ENCODE measurements at regions of chr2 and their contacts with region 1.

Region 1: DNA sequence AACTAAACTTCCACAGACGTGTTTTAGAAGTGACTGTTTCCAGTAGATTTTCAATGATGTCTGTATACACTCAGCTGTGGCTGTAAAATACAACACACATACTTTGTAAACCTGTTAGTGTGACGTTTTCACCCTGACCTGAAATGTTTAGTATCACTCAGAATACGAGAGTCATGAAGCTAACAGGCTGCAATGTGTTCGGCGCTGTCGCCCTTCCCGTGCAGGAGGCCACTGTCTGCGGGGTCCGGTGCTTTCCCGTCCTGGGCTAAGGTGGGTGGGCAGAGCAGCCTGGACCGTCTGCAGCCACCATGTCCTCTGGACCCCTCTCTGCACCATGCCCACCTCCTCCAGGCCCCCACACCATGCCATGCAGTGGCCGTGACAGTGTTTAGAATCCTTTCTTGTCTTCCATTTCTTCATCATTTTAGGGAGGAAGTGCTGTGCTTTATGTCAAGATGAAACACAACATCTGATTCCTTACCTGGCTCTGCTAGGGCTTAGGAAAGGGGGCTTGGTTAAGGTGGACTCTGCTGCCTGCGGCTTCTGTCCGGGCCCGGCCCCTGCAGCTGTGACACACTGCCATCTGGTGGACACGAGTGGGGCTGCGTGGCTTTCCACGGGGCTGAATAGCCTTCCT is 53.8 kb upstream of the RBM44 start:
- DNase-seq: peak; percentile 78
- ATAC-seq: peak; percentile 84
- H3K4me3 Mint-ChIP-seq: no peak overlapping the region
- H3K27ac Mint-ChIP-seq: peak overlapping the region; percentile 52
- H3K4me1 Mint-ChIP-seq: peaks cover 24% of the 10 kb centered on the region
- H3K27me3 Mint-ChIP-seq: no peaks in the 10 kb centered on the region

Region 2: DNA sequence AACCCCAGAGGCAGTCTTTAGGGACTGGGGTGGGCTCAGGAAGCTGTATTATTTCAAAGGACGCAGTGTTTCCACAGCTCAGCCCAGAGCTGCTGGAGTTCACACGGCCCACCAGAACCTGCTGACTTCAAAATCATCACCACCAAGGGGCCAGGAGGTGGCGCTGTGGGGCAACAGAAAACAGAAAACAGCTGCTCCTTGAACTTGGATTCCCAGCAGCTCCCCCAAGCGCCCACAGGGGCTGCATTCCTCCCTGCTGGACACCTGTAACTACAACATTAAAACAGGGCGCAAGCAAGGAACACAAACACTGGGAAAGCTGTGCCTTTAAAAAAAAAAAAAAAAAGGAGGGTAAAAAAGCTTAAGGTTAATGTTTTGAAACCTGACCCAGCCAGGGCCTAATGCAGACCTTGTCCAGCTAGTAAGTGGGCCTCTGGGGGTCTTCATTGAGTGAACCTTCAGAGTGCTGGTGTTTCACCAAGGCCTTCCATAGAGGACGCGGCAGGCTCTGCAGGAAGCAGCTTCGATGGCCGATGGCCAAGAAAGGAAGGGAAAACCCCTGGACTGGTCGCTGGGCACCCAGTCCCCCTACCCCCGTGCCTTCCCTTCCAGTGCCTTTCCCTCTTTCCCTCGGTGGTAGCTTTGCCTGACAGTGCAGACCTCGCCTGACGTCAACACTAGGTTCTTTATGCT is 231.8 kb before region 1 on chr2:
- CTCF ChIA-PET with region 1: interaction called, 24 read pairs
- POLR2A ChIA-PET with region 1: no interaction called
- DNase-seq: peak; percentile 84
- ATAC-seq: peak; percentile 87
- H3K4me3 Mint-ChIP-seq: no peak overlapping the region
- H3K27ac Mint-ChIP-seq: no peak overlapping the region
- H3K4me1 Mint-ChIP-seq: no peaks in the 10 kb centered on the region
- H3K27me3 Mint-ChIP-seq: peaks cover 5% of the 10 kb centered on the region

Region 3: DNA sequence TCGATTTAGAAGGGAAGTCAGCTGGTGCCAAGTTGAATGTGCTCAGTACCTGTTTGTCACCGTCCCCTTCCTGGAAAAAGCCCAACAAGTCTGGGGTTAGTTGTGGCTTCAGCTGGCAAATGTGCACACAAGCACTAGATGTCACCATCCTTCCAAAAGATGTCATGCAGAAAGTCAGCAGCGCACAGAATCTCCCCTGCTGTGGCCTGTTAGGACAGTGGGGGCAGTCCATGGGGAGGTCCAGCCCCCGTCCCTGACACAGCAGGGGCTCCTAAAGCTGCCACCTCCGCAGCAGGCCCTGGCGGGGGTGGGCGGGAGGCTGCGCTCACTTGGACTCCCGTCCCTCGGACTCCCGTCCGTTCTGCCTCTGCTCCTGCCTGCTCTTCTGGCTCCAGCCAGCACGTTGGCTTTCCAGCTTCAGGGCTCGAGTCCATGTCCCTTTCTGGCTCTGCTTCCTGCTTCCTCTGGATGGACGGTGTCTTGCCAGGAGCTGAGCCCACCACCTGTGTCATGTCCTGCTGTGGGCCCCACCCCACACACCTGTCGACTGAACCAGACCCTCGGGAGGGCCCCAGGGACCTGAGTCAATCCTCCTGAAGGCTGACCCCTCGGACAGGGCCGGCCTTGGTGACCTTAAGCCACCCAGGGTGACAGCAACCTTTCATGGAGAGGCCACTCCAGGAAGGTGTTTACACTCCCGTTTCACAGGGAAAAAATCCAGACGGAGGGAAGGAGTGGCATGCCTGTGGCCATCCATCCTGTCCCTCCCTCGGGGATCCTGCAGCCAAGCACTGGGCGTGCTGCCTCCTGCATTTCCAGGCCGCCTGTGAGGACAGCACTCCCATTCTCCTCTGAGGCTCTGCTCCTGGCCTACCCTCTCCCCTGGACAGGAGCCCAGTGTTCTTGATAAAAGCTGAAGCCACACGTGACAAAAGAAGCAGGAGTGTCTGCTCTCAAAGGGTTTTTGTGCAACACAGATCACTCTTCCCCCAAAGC is 162.7 kb before region 1 on chr2:
- CTCF ChIA-PET with region 1: interaction called, 47 read pairs
- POLR2A ChIA-PET with region 1: interaction called, 3 read pairs
- DNase-seq: peak; percentile 77
- ATAC-seq: peak; percentile 91
- H3K4me3 Mint-ChIP-seq: no peak overlapping the region
- H3K27ac Mint-ChIP-seq: peak overlapping the region; percentile 7
- H3K4me1 Mint-ChIP-seq: peaks cover 6% of the 10 kb centered on the region
- H3K27me3 Mint-ChIP-seq: no peaks in the 10 kb centered on the region

Region 4: GRCh38 chr2:237674731-237675276 is 69.9 kb before region 1 on chr2:
- CTCF ChIA-PET with region 1: interaction called, 172 read pairs
- POLR2A ChIA-PET with region 1: no interaction called
- DNase-seq: peak; percentile 89
- ATAC-seq: peak; percentile 82
- H3K4me3 Mint-ChIP-seq: peak overlapping the region; percentile 77
- H3K27ac Mint-ChIP-seq: peak overlapping the region; percentile 96
- H3K4me1 Mint-ChIP-seq: peaks cover 48% of the 10 kb centered on the region
- H3K27me3 Mint-ChIP-seq: peaks cover 3% of the 10 kb centered on the region

Region 5: GRCh38 chr2:237700512-237701032 is 44.2 kb before region 1 on chr2:
- CTCF ChIA-PET with region 1: interaction called, 25 read pairs
- POLR2A ChIA-PET with region 1: no interaction called
- DNase-seq: peak; percentile 64
- ATAC-seq: peak; percentile 52
- H3K4me3 Mint-ChIP-seq: peak overlapping the region; percentile 65
- H3K27ac Mint-ChIP-seq: peak overlapping the region; percentile 89
- H3K4me1 Mint-ChIP-seq: peaks cover 97% of the 10 kb centered on the region
- H3K27me3 Mint-ChIP-seq: no peaks in the 10 kb centered on the region

Region 6: DNA sequence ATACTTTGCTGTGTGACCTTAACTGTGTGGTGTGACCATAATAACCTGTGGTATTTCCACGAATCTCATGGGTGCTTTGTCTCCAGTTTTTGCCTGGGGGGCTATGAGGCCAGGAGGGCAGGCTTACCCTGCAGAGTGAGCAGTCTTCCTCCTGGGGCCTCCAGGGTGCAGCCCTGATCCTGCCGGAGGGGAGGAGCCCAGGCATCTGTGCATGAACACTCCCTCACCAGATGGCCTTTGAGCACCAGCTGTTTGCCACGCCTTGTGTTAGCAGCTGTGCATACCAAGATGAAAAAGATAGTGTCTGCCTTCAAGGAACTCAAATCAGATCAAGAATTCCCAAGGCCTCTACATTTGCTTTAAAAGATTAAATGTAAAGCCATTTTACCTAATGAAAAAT is 21.1 kb before region 1 on chr2:
- CTCF ChIA-PET with region 1: interaction called, 68 read pairs
- POLR2A ChIA-PET with region 1: no interaction called
- DNase-seq: no peak
- ATAC-seq: peak; percentile 41
- H3K4me3 Mint-ChIP-seq: no peak overlapping the region
- H3K27ac Mint-ChIP-seq: peak overlapping the region; percentile 9
- H3K4me1 Mint-ChIP-seq: peaks cover 35% of the 10 kb centered on the region
- H3K27me3 Mint-ChIP-seq: no peaks in the 10 kb centered on the region